Breast epithelium (tissue), 4 donors: ENCODE measurements at regions of chr19 and their contacts with region 1.

Region 1: GRCh38 chr19:3027981-3028304 is 1.1 kb downstream of the TLE2 start:
- DNase-seq: no peak
- H3K4me3 ChIP-seq: peak overlapping the region; percentile 70 to 72 (median 71)
- H3K27ac ChIP-seq: peak overlapping the region; percentile 79 to 87
- H3K4me1 ChIP-seq: peaks cover 0 to 6% of the 10 kb centered on the region in 2 donors
- H3K27me3 ChIP-seq: no peaks in the 10 kb centered on the region
- CTCF ChIP-seq: no peak
- POLR2A ChIP-seq: no peak

Region 2: DNA sequence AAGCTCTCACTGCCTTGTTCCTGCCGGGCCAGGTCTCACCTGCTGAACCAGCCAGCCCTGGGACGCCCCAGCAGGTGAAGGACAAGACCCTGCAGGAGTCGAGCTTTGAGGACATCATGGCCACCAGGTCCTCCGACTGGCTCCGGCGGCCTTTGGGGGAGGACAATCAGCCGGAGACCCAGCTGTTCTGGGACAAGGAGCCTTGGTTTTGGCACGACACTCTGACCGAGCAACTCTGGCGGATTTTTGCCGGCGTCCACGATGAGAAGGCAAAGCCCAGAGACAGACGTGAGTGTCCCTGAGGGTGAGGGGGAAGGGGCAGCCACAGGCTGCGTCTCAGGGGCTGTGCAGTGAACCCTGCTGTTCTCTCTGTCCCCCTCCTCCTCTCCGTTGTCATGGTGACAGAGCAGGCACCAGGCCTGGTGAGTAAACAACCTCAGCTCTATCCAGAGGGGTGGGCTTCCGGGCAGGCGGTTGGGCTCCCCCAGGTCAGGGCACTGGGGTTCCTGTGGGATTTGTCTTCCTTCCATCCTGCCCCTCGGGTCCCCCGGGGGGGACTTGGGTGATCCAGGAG is 40.9 kb before region 1 on chr19:
- intact Hi-C with region 1: loop called (anchors 2 kb)
- DNase-seq: no peak
- H3K4me3 ChIP-seq: no peak overlapping the region
- H3K27ac ChIP-seq: peak overlapping the region in 1 of 2 donors; percentile 21
- H3K4me1 ChIP-seq: peaks cover 4 to 11% of the 10 kb centered on the region in 2 donors
- H3K27me3 ChIP-seq: no peaks in the 10 kb centered on the region
- CTCF ChIP-seq: no peak
- POLR2A ChIP-seq: no peak

Region 3: GRCh38 chr19:3304871-3305423 is 277.0 kb after region 1 on chr19:
- intact Hi-C with region 1: no loop called
- DNase-seq: peak; percentile 40 to 79
- H3K4me3 ChIP-seq: peak overlapping the region in 1 of 3 donors; percentile 11
- H3K27ac ChIP-seq: no peak overlapping the region
- H3K4me1 ChIP-seq: no peaks in the 10 kb centered on the region
- H3K27me3 ChIP-seq: peaks cover 0 to 21% of the 10 kb centered on the region in 2 donors
- CTCF ChIP-seq: peak; percentile 76 to 91 (median 87)
- POLR2A ChIP-seq: no peak